Right ventricle myocardium inferior (tissue), 1 donor: ENCODE measurements at regions of chr2 and their contacts with region 1.

Region 1: DNA sequence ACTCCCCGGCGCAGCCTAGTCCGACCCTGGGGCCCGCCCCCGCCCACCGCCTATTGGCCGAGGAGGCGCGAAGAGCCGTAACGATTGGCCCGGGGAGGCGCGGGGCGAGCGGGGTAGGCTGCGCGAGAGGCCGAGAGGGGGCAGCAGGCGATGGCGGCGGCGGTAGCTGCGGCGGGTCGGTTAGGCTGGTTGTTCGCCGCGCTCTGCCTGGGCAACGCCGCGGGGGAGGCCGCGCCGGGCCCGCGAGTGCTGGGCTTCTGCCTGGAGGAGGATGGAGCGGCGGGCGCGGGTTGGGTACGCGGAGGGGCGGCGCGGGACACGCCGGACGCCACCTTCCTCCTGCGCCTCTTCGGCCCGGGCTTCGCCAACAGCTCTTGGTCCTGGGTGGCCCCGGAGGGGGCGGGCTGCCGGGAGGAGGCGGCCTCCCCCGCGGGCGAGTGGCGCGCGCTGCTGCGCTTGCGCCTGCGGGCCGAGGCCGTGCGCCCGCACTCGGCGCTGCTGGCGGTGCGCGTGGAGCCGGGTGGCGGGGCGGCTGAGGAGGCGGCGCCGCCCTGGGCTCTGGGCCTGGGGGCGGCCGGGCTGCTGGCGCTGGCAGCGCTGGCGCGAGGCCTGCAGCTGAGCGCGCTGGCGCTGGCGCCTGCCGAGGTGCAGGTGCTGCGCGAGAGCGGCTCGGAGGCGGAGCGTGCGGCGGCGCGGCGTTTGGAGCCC is at the start of gene CNNM3:
- DNase-seq: peak; percentile 99
- ATAC-seq: peak; percentile 94
- total RNA-seq, gene CNNM3: 13.3 TPM

Region 2: DNA sequence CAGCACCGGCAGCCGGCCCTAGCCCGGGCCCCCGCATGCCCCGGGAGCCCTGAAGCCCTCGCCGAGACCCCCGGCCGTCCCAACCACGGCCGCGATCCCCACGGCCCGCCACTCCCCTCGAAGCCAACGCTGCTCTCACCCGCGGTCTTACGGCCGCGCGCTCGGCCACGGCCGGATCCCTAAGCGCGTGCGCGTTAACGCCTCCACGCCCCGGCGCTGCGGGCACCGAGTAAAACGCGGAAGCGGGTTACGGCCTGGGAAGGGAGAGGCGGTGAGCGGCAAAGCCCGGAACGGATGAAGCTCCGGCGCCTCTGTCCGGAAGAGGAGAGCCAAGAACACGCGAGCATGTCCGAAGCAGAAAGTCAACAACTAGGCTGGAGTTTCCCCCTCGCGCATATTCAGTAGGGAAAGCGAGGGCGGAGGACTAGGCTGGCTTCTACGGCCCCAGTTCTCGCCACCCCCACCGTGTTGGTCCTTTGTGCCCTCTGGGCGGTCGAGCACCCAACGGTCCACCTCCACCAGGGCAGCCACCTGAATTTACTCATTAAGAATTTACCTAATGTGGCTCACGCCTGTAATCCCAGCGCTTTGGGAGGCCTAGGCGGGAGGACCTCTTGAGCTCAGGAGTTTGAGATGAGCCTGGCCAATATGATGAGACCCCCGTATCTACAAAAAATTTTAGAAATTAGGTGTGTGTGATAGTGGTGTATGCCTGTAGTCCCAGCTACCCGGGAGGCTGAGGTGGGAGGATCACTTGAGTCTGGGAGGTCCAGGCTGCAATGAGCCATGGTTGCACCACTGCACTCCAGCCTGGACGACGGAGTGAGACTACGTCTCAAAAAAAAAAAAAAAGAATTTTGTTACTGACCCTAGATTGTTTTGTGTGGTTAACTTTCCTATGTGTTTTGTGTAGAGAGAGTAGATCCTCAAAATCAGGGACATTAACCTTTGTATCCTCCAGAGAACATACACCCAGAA is 177.8 kb before region 1 on chr2 and contains the start of gene KANSL3:
- intact Hi-C with region 1: loop called (anchors 5 kb)
- DNase-seq: peak; percentile 96
- ATAC-seq: peak; percentile 93
- total RNA-seq, gene KANSL3: 31.9 TPM

Region 3: GRCh38 chr2:96739633-96740428 is 76.5 kb before region 1 on chr2 and contains the start of gene LMAN2L:
- intact Hi-C with region 1: loop called (anchors 1 kb)
- DNase-seq: peak; percentile 98
- ATAC-seq: peak; percentile 98
- total RNA-seq, gene LMAN2L: 26.2 TPM

Region 4: DNA sequence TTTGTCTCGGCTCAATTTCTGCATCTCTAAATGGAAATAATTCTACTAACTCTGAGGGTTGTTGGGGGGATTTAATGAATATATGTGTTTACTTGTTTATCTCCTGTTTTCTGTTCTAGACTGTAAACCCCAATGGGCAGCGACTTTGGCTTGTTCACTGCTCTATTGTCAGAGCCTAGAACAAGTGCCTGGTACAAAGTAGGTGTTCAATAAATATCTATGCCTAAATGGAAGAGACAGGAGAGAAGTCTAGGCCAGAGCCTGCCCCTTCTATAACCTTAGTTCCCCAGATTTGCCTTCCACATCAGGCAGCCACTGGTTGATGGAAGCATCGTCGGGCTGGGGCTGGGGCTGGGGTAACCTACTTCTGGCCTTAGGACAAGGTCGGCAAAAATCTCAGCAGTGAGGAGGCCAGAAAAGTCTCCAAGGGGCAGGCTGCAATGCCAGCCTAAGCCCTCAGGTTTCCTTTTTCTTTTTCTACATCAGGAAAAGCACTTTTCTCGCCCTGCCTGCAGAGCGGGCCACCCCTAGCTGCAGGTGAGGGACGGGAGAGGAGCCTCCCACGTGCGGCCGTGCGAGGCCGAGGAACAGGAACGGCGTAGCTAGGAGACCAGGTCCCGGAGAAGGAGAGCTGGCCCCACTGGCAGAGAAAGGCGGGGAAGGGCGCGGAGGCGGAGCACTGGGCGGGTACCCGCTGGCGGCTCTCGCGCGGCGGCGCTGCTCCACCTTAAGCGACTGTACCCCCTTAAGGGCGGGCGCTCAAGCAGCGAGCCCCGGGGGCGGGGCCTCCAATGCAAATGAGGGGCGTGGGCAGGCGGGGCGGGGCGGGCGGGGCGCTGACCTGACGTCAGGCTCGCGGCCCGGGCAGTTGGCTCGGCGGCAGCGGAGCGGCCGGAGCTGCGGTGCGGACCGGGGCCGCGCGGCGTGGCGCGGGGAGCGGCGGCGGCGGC is 56.0 kb before region 1 on chr2 and contains the start of gene CNNM4:
- intact Hi-C with region 1: loop called (anchors 5 kb)
- DNase-seq: peak; percentile 98
- ATAC-seq: peak; percentile 97
- total RNA-seq, gene CNNM4: 33.3 TPM

Region 5: DNA sequence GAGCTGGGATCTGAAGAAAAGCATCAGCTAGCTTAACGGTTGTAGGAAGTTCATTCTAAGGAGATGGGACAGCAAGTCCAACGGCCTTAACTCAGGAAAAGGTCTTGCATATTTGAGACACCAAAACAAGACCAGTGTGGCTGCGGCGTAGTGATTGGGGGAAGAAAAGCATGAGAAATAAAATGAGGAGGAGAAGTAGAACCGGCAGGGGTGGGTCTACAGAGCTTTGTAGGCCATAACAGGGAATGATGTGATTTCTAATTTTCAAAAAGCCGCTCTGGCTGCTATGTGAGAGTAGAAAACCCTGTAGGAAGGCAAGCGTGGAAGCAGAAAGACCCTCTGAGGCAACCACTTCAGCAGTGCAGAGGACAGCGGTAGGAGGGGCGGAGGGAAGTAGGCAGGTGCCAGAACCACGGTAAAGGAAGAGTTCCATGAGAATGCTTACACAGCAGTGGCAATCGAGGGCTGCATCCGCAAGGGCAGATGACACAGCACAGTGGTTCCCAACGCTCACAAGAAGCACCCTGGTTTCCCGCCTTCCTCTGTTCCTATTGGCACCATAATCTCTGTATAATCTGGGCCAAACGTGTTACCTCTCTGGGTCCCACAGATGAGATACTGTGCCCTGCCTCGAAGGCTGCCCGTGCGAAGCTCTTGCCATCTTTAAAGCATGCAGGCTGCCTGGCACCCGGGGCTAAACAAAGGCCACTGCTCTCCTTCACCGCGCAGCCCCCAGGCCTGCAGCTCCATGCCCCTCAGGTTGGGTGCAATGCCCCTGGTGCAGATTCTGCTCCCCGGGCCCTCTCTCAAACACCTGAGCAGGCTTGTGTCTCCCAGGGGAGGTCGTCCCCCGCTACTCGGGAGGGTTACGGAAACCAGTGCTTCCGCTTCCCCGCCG is 40.7 kb after region 1 on chr2:
- intact Hi-C with region 1: loop called (anchors 5 kb)
- DNase-seq: no peak
- ATAC-seq: no peak

Region 6: DNA sequence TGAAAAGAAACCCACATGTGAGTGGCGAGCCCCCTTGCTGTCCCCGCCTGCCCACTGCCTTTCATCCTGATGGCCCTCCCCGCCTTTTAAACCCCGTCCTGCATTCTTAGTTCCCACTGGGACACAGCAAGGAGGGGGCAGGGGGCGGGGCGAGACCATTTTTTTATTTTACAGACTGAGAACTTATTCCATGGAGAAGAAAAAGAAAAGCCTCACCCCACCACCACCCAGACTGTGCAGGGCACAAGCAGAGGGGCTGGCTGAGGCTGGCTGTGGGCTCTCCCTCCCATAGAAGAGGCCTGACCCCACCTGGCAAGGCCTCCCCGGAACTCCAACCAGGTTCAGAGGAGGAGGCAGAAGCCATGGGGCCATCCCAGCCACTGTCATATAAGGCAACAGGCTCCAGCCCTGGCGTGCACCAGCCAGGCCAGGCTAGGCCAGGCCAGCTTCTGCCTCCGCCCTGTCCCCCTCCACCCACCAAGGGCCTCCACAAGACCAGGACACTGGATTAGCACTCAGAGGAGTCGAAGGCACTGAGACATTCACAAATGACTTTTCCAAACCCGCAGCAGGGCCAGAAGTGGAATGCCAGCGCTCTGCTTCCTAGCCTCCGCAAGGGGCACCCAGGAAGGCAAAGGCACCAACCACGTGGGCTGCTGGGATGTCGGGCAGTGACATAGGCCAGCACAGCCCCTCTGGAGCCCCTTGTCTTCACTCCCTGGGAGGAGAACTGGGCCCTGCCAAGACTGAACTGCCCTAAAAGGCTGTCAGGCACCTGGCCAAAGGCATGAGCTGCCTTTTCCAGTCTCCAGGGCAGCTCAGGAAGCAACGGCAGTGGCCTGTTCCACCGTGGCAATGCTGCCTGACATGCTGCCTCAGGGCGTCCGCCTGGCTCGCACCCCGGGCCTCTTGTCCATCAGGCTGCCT is 91.1 kb after region 1 on chr2:
- intact Hi-C with region 1: loop called (anchors 5 kb)
- DNase-seq: peak; percentile 93
- ATAC-seq: peak; percentile 94

Region 7: DNA sequence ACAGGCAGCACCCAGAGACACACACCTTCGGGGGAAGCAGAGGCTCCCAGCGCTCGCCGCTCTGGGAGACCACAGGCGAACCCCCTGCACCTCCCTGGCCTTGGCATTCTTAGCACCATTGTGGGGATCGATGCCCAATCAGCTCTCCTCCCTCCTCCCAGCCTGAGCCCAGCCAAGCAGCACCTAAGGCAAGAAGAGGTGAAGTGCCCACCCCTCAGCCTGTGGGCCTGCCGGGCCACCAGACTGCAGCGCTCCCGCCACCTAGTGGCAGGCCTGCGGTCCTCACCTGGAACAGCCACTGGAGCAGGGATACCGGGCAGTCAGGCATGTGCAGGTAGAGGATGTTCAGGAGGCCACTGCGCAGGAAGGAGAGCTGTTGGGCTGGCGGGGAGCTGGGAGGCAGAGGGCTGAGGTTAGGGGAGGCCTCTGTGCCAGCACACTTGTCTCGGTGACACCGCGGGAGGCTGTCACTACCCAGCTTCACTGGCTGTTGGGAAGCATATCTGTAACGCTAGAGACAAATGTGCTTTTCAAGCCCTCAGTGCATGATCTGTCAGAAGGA is 134.9 kb after region 1 on chr2:
- intact Hi-C with region 1: loop called (anchors 5 kb)
- DNase-seq: peak; percentile 80
- ATAC-seq: peak; percentile 78

Region 8: DNA sequence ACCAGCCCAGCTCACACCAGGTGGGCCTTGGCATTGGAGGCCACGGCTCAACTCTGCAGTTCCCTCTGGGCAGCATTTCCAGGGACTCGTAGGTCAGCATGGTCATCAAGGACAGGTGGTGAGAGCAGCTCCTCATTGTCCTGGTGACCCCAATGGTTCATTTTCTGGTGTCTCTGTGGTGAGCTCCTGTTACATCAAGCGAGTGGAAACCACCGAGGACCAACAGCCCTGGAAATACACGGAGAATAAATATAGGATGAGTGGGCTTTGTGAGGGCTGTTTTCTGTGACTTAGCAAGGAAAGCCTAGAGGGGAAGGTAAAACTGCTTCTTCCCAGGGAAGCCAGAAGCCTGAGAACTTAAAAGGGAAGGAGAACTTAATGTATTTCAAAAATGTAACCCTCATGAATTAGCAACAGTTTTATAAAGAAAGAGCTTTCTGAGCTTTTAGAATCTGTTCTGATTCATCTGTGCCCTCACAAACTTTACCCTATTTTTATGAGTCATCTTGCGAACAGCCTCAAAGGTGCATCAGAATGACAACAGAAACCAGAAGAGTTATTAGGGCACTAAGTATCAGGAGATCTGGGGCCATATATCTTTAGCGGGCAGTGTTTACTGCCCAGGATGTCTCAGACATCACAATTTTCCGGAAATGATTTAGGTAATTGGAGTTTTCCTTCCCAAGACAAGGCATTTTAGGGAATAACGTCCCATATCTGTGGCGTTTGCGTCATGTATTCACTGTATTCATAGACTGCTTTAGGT is 872.0 kb after region 1 on chr2:
- intact Hi-C with region 1: no loop called
- DNase-seq: no peak
- ATAC-seq: no peak